Left cardiac atrium (tissue), 4 donors: ENCODE measurements at regions of chr17 and their contacts with region 1.

Region 1: DNA sequence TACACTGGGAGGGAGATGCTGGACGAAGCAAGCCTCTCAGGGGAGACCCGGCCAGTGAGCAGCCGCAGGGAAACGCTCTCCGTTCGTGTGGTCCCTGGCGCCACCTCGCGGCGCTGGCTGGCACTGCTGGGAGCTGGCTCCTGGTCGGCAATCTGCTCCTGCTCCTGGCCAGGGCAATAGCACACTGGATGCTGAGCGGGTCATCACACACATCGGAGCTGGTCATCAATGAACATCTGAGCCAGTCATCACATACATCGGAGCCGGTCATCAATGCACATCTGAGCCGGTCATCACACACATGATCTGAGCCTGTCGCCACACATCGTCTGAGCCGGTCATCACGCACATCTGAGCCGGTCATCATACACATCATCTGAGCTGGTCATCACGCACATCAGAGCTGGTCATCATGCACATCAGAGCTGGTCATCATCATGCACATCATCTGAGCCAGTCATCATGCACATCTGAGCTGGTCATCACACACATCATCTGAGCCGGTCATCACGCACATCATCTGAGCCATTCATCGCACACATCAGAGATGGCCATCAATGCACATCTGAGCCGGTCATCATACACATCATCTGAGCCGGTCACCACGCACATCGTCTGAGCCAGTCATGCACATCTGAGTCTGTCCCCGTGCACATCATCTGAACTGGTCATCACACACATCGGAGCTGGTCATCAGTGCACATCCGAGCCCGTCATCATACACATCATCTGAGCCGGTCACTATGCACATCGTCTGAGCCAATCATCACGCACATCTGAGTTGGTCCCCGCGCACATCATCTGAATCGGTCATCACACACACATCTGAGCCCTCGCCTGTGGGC is 217.3 kb downstream of the RBFOX3 start:
- DNase-seq: peak; percentile 83
- ATAC-seq: peak; percentile 84

Region 2: GRCh38 chr17:79009397-79010308 is 383.9 kb before region 1 on chr17 and contains the start of gene CANT1:
- intact Hi-C with region 1: loop called in 1 of 2 experiments (anchors 10 kb)
- DNase-seq: peak; percentile 90
- ATAC-seq: peak; percentile 96 to 99
- total RNA-seq, gene CANT1: 30.5 to 33.3 TPM

Region 3: DNA sequence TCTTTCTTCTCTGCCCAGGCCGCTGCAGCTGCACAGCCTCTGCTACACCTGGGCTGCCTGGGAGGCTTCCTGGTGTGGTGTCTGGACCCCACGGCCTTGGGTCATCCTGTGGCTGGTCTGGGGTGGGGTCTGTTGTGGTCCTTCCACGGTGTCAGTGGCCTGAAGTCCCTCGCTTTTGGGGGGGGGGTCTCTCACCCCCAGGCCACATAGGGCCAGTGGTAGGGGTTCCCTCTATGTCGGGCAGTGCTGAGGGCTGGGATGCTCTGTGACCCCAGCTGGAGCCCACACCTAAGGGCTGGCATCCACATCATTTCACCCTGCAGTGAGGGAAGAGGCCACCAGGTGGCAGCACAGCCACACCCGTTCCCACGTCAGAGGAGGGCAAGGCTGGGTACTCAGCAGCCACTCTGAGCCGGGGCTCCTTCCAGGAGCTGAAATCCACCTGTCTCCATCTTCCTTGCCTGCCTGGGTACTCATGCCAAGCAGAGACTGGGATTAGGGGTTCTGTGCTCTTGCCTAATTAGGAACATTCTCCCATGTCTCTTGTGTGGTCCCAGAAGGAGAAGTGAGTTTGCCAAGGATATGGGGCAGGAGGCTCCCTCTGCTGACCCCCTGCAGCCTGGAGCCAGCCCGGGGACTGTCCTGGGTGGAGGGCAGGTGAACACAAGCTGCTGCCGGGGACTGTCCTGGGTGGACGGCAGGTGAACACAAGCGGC is 306.0 kb before region 1 on chr17:
- intact Hi-C with region 1: loop called (anchors 5 kb)
- DNase-seq: peak; percentile 75
- ATAC-seq: peak; percentile 61 to 64

Region 4: GRCh38 chr17:79188048-79188447 is 205.5 kb before region 1 on chr17:
- intact Hi-C with region 1: loop called (anchors 2 to 10 kb)
- DNase-seq: no peak
- ATAC-seq: peak in 1 of 2 donors; percentile 31